Calu3 (cell line): ENCODE measurements at regions of chr10 and their contacts with region 1.

Region 1: DNA sequence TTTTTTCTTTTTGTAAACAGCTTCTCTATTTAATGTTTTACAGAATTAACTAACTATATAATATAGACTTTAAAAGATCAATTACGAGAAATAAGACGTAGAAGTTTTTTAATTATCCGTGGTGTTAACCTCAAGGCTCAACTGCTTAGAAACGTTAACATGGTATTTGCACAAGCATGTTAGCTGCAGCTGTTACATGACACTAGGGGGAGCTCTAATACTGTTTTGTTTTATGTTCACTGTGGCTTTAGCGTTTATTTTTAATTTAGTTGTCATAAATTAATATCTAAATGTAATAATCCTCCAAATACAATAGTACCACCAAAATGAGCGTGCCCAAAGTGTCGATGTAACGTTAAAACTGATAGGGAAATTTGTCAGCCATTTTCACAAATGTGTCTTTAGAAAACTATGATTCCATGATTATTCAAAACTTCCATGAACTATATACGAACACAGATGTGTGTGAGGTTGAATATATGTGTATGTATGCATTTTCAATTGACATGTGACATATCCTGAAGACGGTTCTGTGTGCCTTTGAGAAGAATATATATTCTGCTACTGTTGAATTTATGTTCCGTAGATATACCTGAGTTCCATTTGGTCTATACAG is 828.8 kb upstream of the MBL2 start:
- DNase-seq: no peak
- H3K4me3 Mint-ChIP-seq: no peak overlapping the region
- H3K27ac Mint-ChIP-seq: no peak overlapping the region
- H3K4me1 Mint-ChIP-seq: peaks cover 10% of the 10 kb centered on the region
- H3K27me3 Mint-ChIP-seq: no peaks in the 10 kb centered on the region
- CTCF ChIP-seq: peak; percentile 55

Region 2: GRCh38 chr10:52818019-52818418 is 783.3 kb before region 1 on chr10:
- CTCF ChIA-PET with region 1: no interaction called
- intact Hi-C with region 1: loop called (anchors 5 kb)
- DNase-seq: peak; percentile 30
- H3K4me3 Mint-ChIP-seq: no peak overlapping the region
- H3K27ac Mint-ChIP-seq: no peak overlapping the region
- H3K4me1 Mint-ChIP-seq: no peaks in the 10 kb centered on the region
- H3K27me3 Mint-ChIP-seq: no peaks in the 10 kb centered on the region
- CTCF ChIP-seq: peak; percentile 29

Region 3: DNA sequence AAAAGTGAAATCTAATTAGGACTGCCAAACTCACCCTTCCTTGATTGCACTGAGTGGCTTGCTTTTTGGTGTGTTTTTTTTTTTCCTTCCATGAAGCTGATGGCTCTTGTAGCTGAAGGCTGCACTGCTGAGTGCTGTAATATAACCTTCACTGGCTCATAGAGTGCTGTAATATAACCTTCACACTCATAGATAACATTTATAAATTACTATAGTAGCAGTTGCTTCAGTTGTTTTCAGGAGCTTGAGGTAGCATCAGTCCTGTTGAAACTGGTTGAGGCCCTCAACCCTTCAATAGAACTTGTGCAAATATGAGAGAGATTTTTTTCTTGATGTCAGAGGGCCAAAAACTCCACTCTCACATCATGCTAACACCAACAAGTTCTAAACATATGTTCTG is 423.9 kb before region 1 on chr10:
- CTCF ChIA-PET with region 1: no interaction called
- intact Hi-C with region 1: no loop called
- DNase-seq: no peak
- H3K4me3 Mint-ChIP-seq: no peak overlapping the region
- H3K27ac Mint-ChIP-seq: no peak overlapping the region
- H3K4me1 Mint-ChIP-seq: no peaks in the 10 kb centered on the region
- H3K27me3 Mint-ChIP-seq: no peaks in the 10 kb centered on the region
- CTCF ChIP-seq: no peak

Region 4: DNA sequence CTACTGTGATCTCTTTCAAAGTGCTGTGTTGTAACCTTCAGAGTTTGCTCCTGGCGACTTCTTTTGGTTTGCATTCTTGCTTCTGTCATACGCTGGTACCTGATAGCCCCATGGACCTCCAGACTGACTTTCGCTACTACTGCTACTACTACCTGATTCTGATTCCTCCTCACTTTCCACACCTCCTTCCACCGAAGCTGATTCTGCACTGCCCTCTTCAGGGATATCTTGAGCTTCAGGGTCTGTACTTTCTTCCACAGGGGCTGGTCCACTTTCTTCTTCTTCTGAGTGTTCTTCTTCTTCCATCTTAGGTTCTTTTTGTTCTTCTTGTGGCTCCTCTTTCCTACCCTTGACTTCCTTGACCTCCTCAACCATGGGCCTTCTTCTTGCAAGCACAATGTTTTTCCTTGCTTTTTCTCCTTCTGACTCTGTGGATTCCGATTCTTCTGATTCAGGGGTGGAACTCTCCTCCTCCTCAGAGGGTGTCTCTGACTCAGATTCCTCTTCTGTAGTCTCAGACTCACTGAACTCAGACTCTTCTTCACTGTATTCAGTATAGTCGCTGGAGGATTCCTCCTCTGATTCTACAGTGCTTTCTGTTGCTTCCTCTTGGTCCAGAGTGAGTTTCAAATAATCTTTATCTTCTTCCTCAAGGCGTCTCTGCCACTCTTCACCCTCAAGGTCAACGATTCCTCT is 207.5 kb after region 1 on chr10:
- CTCF ChIA-PET with region 1: interaction called, 3 read pairs
- intact Hi-C with region 1: loop called (anchors 5 kb)
- DNase-seq: peak; percentile 6
- H3K4me3 Mint-ChIP-seq: no peak overlapping the region
- H3K27ac Mint-ChIP-seq: no peak overlapping the region
- H3K4me1 Mint-ChIP-seq: peaks cover 9% of the 10 kb centered on the region
- H3K27me3 Mint-ChIP-seq: no peaks in the 10 kb centered on the region
- CTCF ChIP-seq: no peak

Region 5: GRCh38 chr10:53997953-53998352 is 396.6 kb after region 1 on chr10:
- CTCF ChIA-PET with region 1: no interaction called
- intact Hi-C with region 1: loop called (anchors 1 kb)
- DNase-seq: no peak
- H3K4me3 Mint-ChIP-seq: no peak overlapping the region
- H3K27ac Mint-ChIP-seq: no peak overlapping the region
- H3K4me1 Mint-ChIP-seq: no peaks in the 10 kb centered on the region
- H3K27me3 Mint-ChIP-seq: no peaks in the 10 kb centered on the region
- CTCF ChIP-seq: peak; percentile 29

Region 6: DNA sequence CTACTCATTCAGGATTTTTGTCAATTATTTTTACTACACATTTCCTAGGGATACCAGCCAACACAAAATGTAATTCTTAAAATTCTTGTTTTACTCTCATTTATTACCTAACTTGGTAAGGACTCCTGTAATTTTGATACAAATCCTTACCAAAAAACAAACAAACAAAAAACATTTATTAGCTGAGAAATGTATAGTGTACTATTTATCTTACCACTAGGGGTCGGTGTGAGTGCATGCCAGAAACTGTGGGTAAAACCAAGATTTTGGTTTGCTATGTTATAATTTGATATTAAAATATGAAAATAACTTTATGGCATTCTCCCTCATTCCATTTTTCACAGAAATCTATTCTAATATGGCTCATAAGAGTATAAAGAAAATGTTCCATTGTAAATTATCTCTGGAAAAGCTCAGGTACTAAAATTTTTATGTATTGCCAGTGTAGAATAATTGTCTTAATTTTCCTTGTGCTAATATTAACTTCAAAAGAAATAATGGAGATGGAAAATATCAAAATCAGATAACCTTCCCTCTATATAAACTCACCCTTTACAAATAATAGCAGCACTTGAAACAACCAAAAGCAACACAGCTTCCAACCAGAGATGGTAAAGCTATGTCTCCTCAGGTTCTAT is 1490.4 kb after region 1 on chr10:
- CTCF ChIA-PET with region 1: no interaction called
- intact Hi-C with region 1: loop called (anchors 10 kb)
- DNase-seq: peak; percentile 11
- H3K4me3 Mint-ChIP-seq: no peak overlapping the region
- H3K27ac Mint-ChIP-seq: no peak overlapping the region
- H3K4me1 Mint-ChIP-seq: no peaks in the 10 kb centered on the region
- H3K27me3 Mint-ChIP-seq: no peaks in the 10 kb centered on the region
- CTCF ChIP-seq: peak; percentile 80